ENCODE measurements at regions of chr1 and their contacts with region 1.

Region 1: DNA sequence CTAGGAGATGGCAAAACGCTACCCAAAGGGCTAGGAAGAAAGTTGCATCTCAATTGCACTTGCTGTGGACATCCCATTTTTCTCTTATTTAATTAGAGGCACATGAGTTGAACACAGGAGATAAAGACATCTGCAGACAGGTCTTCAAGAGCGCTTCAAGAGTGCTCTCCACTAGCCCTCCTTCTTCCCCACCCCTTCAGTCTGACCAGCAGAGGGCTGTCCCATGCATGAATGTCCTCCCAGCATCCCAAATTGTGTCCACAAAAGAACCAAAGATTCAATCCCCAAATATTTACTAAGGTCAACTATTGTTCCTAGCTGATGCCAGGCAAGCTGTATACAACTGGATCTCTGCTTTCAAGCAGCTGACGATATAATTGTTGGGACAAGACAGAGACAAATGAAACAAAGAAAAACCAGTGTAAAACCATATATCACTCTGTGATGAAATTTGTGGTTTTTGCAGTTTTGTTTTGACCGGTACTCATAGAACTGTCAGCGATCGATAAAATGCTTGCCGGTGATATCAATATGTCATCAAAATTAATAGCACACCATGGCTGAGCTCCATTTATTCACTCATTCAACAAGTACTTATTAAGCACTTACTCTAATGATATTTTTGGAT is 174.2 kb downstream of the TNR start:
- DNase-seq: no peak
- H3K4me3 ChIP-seq: no peak overlapping the region
- H3K27ac ChIP-seq: no peak overlapping the region
- H3K4me1 ChIP-seq: no peaks in the 10 kb centered on the region
- H3K27me3 ChIP-seq: no peaks in the 10 kb centered on the region
- CTCF ChIP-seq: no peak
- EP300 ChIP-seq: no peak
- POLR2A ChIP-seq: no peak

Region 2: GRCh38 chr1:174726167-174726879 is 842.9 kb before region 1 on chr1:
- intact Hi-C with region 1: loop called in 1 of 4 experiments (anchors 5 kb)
- DNase-seq: no peak
- H3K4me3 ChIP-seq: no peak overlapping the region
- H3K27ac ChIP-seq: no peak overlapping the region
- H3K4me1 ChIP-seq: no peaks in the 10 kb centered on the region
- H3K27me3 ChIP-seq: no peaks in the 10 kb centered on the region
- CTCF ChIP-seq: no peak
- EP300 ChIP-seq: no peak
- POLR2A ChIP-seq: no peak

Region 3: GRCh38 chr1:175530183-175530582 is 39.0 kb before region 1 on chr1:
- intact Hi-C with region 1: no loop called
- DNase-seq: no peak
- H3K4me3 ChIP-seq: no peak overlapping the region
- H3K27ac ChIP-seq: no peak overlapping the region
- H3K4me1 ChIP-seq: no peaks in the 10 kb centered on the region
- H3K27me3 ChIP-seq: no peaks in the 10 kb centered on the region
- CTCF ChIP-seq: no peak
- EP300 ChIP-seq: no peak
- POLR2A ChIP-seq: no peak

Measured in ovary (tissue), 10 donors.